Activated CD4-positive, alpha-beta T cell treated with anti-CD3 and anti-CD28 coated beads, Interleukin-2, amount 10 ng/mL, durations not matched to agents 24 days and 14 days (primary cell): ENCODE measurements at regions of chr6 and their contacts with region 1.

Region 1: DNA sequence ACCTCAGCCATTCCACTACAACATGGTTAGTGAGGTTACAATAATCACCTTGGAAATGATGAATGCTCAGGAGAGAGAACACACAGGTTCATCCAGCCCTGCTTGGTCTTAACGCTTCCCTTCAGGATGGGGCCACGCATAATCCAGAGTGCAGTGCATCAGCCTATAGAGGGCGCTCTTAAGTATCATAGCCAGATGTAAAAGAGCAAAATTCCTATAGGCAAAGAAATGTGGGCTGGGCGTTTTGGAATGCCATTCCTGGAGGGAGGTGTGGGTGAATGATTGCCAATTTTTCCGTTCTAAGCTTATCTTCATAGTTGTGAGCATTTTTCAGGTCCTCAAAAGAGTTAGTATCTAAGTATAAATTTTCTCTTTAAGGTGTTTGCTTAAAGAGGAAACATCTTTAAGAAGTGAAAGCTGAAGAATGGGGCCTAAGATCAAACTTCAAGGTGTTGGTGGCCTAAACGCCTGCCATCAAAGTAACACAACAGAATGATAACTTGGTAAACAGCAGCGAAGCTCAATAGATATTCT is 1.8 kb downstream of the RIPOR2 start:
- DNase-seq: peak; percentile 88
- H3K4me3 Mint-ChIP-seq: peak overlapping the region; percentile 89
- H3K27ac Mint-ChIP-seq: peak overlapping the region; percentile 95
- H3K4me1 Mint-ChIP-seq: peaks cover 86% of the 10 kb centered on the region
- H3K27me3 Mint-ChIP-seq: no peaks in the 10 kb centered on the region

Region 2: GRCh38 chr6:24720604-24721460 is 213.1 kb before region 1 on chr6:
- intact Hi-C with region 1: loop called (anchors 10 kb)
- DNase-seq: peak; percentile 100
- H3K4me3 Mint-ChIP-seq: peak overlapping the region; percentile 99
- H3K27ac Mint-ChIP-seq: peak overlapping the region; percentile 100
- H3K4me1 Mint-ChIP-seq: peaks cover 33% of the 10 kb centered on the region
- H3K27me3 Mint-ChIP-seq: no peaks in the 10 kb centered on the region

Region 3: DNA sequence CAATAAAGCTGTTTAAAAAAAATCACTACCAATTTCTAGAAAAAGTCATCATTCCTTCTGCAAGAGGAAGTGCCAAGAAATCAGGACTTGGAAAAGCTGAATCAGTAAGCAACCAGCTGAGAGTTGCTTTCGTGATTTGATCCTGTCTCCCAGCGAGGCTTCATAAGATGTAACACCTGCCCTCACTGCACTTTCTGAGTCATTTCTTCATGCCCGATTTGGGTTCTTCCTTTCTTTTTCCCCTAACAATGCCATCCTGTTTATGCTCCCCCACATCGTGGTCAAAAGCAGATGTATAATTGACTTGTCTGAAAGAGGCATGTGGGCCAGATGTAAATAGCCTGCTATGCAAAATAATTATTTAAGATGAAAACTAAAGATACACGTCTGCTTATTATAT is 50.3 kb before region 1 on chr6:
- intact Hi-C with region 1: loop called (anchors 2 kb)
- DNase-seq: no peak
- H3K4me3 Mint-ChIP-seq: peak overlapping the region; percentile 67
- H3K27ac Mint-ChIP-seq: peak overlapping the region; percentile 94
- H3K4me1 Mint-ChIP-seq: peaks cover 60% of the 10 kb centered on the region
- H3K27me3 Mint-ChIP-seq: no peaks in the 10 kb centered on the region

Region 4: GRCh38 chr6:24949020-24949569 is 15.2 kb after region 1 on chr6:
- intact Hi-C with region 1: loop called (anchors 1 kb)
- DNase-seq: peak; percentile 92
- H3K4me3 Mint-ChIP-seq: peak overlapping the region; percentile 63
- H3K27ac Mint-ChIP-seq: peak overlapping the region; percentile 91
- H3K4me1 Mint-ChIP-seq: peaks cover 71% of the 10 kb centered on the region
- H3K27me3 Mint-ChIP-seq: no peaks in the 10 kb centered on the region

Region 5: GRCh38 chr6:25006565-25007001 is 72.6 kb after region 1 on chr6:
- intact Hi-C with region 1: loop called (anchors 1 kb)
- DNase-seq: peak; percentile 88
- H3K4me3 Mint-ChIP-seq: peak overlapping the region; percentile 64
- H3K27ac Mint-ChIP-seq: peak overlapping the region; percentile 93
- H3K4me1 Mint-ChIP-seq: peaks cover 58% of the 10 kb centered on the region
- H3K27me3 Mint-ChIP-seq: no peaks in the 10 kb centered on the region

Region 6: GRCh38 chr6:25138237-25139125 is 204.5 kb after region 1 on chr6:
- intact Hi-C with region 1: loop called (anchors 1 kb)
- DNase-seq: peak; percentile 92
- H3K4me3 Mint-ChIP-seq: peak overlapping the region; percentile 92
- H3K27ac Mint-ChIP-seq: peak overlapping the region; percentile 98
- H3K4me1 Mint-ChIP-seq: peaks cover 33% of the 10 kb centered on the region
- H3K27me3 Mint-ChIP-seq: no peaks in the 10 kb centered on the region